K562 (cell line): ENCODE measurements at regions of chr7 and their contacts with region 1.

Region 1: GRCh38 chr7:16753102-16753931 is at the start of gene TSPAN13:
- DNase-seq: peak; percentile 93 to 96 (median 94)
- ATAC-seq: peak; percentile 93
- H3K4me3 ChIP-seq: peak within 1 kb of the TSS; percentile 72
- H3K27ac ChIP-seq: peak within 1 kb of the TSS; percentile 63
- H3K4me1 ChIP-seq: peaks cover 9 to 11% of the 10 kb centered on the region in 2 experiments; a peak in 4 of 5 replicates
- H3K27me3 ChIP-seq: no peaks in the 10 kb centered on the region
- CTCF ChIP-seq: no peak
- EP300 ChIP-seq: no peak
- POLR2A ChIP-seq: peak; percentile 51; the same call in 1 of the 2 replicates
- RAD21 ChIP-seq: no peak; a peak in 1 of 4 replicates
- polyA plus RNA-seq, gene TSPAN13: 7.8 to 9.8 TPM

Region 2: GRCh38 chr7:16420649-16421332 is 332.5 kb before region 1 on chr7:
- CTCF ChIA-PET with region 1: no interaction called
- POLR2A ChIA-PET with region 1: no interaction called
- in situ Hi-C with region 1: no loop called
- intact Hi-C with region 1: loop called (anchors 10 kb)
- DNase-seq: peak; percentile 85 to 97 (median 90)
- ATAC-seq: peak; percentile 87
- H3K4me3 ChIP-seq: peak overlapping the region; percentile 66
- H3K27ac ChIP-seq: peak overlapping the region; percentile 97
- H3K4me1 ChIP-seq: peaks cover 23 to 46% of the 10 kb centered on the region in 2 experiments
- H3K27me3 ChIP-seq: no peaks in the 10 kb centered on the region
- CTCF ChIP-seq: peak; percentile 29 to 73 (median 36); a peak in 5 of 6 replicates
- EP300 ChIP-seq: no peak
- POLR2A ChIP-seq: peak; percentile 96
- RAD21 ChIP-seq: peak; percentile 30 to 32; a peak in 3 of 4 replicates

Region 3: GRCh38 chr7:16708980-16709379 is 44.3 kb before region 1 on chr7:
- CTCF ChIA-PET with region 1: no interaction called
- POLR2A ChIA-PET with region 1: no interaction called
- in situ Hi-C with region 1: no loop called
- intact Hi-C with region 1: loop called (anchors 10 kb)
- DNase-seq: peak in 1 of 4 experiments; percentile 56
- ATAC-seq: peak; percentile 74
- H3K4me3 ChIP-seq: no peak overlapping the region
- H3K27ac ChIP-seq: peak overlapping the region; percentile 43; the same call in 1 of the 3 replicates
- H3K4me1 ChIP-seq: peaks cover 0 to 5% of the 10 kb centered on the region in 2 experiments; a peak in 1 of 5 replicates
- H3K27me3 ChIP-seq: no peaks in the 10 kb centered on the region
- CTCF ChIP-seq: no peak
- EP300 ChIP-seq: no peak
- POLR2A ChIP-seq: no peak
- RAD21 ChIP-seq: peak in 1 of 2 experiments; percentile 32; a peak in 1 of 4 replicates

Region 4: DNA sequence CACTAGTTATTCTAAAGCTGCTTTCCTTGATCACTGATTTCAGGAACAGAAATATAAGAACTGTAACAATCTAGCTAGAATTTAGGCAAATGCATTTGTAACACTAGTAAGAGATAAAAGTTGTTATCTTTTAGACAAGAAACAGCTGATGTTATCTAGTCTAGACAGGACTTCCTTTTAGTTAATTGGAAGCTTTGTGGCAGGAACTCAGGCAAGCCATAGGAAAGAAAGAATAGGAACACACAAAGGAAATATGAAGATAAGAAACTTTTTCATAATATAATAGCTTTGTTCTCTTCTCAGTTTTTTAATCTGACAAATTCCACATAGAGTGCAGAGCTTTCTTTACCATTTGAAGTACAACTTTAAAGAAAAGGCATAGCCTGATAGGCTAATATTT is 187.5 kb after region 1 on chr7:
- CTCF ChIA-PET with region 1: no interaction called
- POLR2A ChIA-PET with region 1: no interaction called
- in situ Hi-C with region 1: no loop called
- intact Hi-C with region 1: no loop called
- DNase-seq: no peak
- ATAC-seq: no peak
- H3K4me3 ChIP-seq: no peak overlapping the region
- H3K27ac ChIP-seq: no peak overlapping the region
- H3K4me1 ChIP-seq: no peaks in the 10 kb centered on the region
- H3K27me3 ChIP-seq: no peaks in the 10 kb centered on the region
- CTCF ChIP-seq: no peak
- EP300 ChIP-seq: no peak
- POLR2A ChIP-seq: no peak
- RAD21 ChIP-seq: no peak